ENCODE measurements at regions of chr2 and their contacts with region 1.

Region 1: DNA sequence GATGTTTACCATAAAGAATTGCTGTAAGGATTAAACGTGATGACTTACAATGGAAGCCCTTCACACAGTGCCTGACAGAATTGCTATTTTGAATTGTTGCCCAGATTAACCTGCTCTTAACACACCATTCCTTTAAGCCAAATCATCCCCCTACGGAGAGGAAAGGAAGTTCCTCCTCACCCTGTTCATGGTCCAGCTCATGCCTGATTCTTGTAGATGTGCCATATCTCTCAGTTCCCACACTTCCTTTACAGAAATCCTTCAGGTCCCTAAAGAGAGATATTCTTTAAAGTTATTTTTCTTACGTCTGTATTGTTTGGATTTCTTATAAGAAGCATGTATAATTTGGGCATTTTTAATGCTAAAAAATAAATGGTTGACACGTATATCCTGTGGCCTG is 127.5 kb upstream of the DAPL1 start:
- DNase-seq: no peak
- ATAC-seq: peak in 3 of 4 donors; percentile 50 to 68 (median 55)
- H3K4me3 ChIP-seq: no peak overlapping the region
- H3K27ac ChIP-seq: peak overlapping the region in 11 of 12 donors; percentile 10 to 76 (median 57)
- H3K4me1 ChIP-seq: peaks cover 4 to 66% (median 38%) of the 10 kb centered on the region in 12 donors
- H3K27me3 ChIP-seq: no peaks in the 10 kb centered on the region
- CTCF ChIP-seq: no peak
- POLR2A ChIP-seq: no peak

Region 2: GRCh38 chr2:158637357-158637756 is 30.2 kb before region 1 on chr2:
- intact Hi-C with region 1: no loop called
- DNase-seq: no peak
- ATAC-seq: no peak
- H3K4me3 ChIP-seq: no peak overlapping the region
- H3K27ac ChIP-seq: no peak overlapping the region
- H3K4me1 ChIP-seq: peaks cover 0 to 9% (median 0%) of the 10 kb centered on the region in 12 donors
- H3K27me3 ChIP-seq: no peaks in the 10 kb centered on the region
- CTCF ChIP-seq: no peak
- POLR2A ChIP-seq: no peak

Region 3: GRCh38 chr2:158716121-158716771 is 48.7 kb after region 1 on chr2:
- intact Hi-C with region 1: loop called in 4 of 10 experiments (anchors 1 to 5 kb)
- DNase-seq: peak; percentile 67 to 84 (median 78)
- ATAC-seq: peak; percentile 75 to 91 (median 86)
- H3K4me3 ChIP-seq: no peak overlapping the region
- H3K27ac ChIP-seq: peak overlapping the region; percentile 51 to 88 (median 78)
- H3K4me1 ChIP-seq: peaks cover 0 to 48% (median 32%) of the 10 kb centered on the region in 12 donors
- H3K27me3 ChIP-seq: no peaks in the 10 kb centered on the region
- CTCF ChIP-seq: no peak
- POLR2A ChIP-seq: no peak

Measured in heart left ventricle (tissue), 16 donors.